ENCODE measurements at regions of chr13 and their contacts with region 1.

Region 1: DNA sequence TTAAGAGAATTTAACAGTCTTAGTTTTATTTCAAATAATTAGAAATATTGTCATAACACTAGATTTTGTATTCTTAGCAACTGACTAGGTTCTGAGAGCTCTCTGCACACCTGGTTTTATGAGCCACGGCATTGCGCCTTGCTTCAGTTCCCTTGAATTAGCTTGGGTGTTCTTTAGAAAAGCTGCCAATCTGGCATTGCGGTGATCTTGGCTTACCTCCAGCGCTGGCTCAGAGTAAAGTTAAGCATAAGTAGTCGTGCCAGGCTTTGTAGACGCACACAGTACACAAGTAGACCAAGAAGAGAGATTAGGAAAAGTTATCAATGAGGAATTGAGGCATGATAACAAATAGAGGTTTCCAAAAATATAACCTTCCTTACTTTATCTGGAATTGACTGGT is 45.7 kb downstream of the TPP2 start:
- DNase-seq: no peak
- H3K4me3 ChIP-seq: no peak overlapping the region
- H3K27ac ChIP-seq: no peak overlapping the region
- H3K4me1 ChIP-seq: no peaks in the 10 kb centered on the region
- H3K27me3 ChIP-seq: no peaks in the 10 kb centered on the region

Region 2: DNA sequence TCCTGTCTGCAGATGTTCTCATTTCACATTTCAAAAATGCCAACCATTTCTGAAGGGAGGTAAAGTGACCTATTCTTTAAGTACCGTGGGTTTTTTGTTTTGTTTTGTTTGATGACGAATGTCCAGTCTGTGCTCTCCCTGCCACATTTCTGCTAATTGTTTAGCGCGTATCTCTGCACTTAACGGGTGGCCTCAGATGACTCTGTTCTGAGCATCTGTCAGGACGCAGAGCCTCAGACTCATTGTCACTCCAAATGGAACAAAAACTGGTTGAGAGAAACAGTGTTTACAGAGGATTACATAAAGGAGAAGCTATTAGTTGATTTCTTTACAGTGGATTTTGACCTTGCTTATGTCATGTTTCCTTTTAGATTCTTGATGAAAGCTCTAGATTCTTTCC is 22.0 kb before region 1 on chr13:
- CTCF ChIA-PET with region 1: interaction called, 12 read pairs
- POLR2A ChIA-PET with region 1: interaction called, 6 read pairs
- DNase-seq: no peak
- H3K4me3 ChIP-seq: no peak overlapping the region
- H3K27ac ChIP-seq: no peak overlapping the region
- H3K4me1 ChIP-seq: no peaks in the 10 kb centered on the region
- H3K27me3 ChIP-seq: no peaks in the 10 kb centered on the region